Cardiac septum (tissue), 1 donor: ENCODE measurements at regions of chr1 and their contacts with region 1.

Region 1: DNA sequence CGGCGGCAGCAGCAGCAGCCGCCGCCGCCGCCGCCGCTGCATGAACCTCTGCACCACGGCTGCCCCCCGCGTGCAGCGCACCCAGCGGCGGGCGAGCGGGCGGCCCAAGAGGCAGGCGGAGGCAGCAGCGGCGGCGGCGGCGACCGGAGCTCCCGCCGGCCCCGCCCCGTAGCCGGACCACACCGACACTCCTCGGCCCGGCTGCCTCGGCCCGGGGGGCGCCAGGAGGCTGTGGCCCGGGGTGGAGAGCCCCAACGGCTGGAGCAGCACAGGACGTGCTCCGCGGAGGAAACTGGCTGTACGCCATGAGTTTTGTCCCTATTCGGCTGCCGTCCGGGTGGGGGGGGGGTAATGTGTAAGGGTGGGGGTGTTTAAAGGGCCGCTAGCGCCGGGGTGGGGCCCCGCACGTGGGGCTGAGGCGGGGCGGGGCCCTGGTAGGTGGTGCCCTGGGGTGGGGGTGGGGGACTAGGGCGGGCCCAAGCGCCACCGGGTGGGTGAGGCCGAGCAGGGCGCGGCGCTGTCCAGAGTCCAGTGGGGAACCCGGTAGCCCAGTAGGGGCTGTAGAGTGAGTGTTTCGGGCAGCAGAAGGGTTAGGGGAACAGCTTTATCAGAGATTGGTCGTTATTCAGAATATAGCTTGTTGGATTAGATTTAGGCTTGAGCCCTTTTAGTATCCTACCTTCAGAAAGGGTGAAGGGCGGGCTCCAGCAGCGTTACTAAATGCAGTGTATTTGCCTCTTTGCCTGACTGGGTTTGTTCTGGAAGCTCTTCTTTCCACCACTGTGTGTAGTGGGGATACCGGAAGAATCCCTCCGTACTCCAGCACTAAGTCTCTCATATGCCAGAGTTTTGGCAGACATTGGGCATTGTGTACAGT is at the start of gene FAM78B:
- DNase-seq: peak; percentile 81
- total RNA-seq, gene FAM78B: 2.7 TPM

Region 2: GRCh38 chr1:165403835-165404482 is 763.0 kb before region 1 on chr1:
- intact Hi-C with region 1: loop called (anchors 10 kb)
- DNase-seq: no peak

Region 3: DNA sequence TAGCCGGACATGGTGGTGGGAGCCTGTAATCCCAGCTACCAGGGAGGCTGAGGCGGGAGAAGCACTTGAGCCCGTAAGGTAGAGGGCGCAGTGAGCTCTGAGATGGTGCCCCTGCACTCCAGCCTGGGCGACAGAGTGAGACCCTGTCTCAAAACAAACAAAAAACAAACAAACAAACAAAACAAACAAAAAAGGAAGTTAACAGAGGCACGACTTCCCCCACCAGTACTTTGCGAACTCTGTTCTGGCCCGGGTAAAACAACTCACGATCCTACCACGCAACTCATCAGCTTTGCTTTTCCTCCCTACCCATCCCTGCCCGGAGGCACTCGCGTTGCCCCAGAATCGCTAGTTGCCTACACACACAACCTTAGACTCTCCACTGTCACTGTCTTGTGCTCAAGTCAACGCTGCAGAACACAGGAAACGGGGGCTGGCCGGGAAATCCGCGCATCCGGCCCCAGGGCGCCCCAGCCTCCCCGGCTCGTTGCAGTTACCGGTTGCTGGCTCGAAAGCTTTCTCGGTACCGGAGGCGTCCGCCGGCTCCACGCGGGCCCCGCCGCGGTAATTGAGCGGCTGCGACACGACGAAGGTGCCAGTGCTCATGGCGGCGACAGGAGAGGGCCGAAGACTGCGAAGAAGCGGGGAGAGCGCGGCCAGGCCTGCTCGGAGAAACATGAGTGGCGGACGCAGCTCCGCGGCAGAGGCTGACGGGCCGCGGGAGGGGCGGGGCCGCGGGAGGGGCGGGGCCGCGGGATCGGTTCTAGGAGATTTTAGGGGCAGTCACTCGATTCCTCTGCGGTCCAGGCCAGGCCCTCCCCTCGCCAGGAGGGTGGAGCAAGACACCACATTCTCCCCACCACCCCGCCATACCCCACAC is 468.8 kb before region 1 on chr1 and contains the start of gene ALDH9A1:
- intact Hi-C with region 1: loop called (anchors 5 kb)
- DNase-seq: peak; percentile 96
- total RNA-seq, gene ALDH9A1: 61.3 TPM

Region 4: DNA sequence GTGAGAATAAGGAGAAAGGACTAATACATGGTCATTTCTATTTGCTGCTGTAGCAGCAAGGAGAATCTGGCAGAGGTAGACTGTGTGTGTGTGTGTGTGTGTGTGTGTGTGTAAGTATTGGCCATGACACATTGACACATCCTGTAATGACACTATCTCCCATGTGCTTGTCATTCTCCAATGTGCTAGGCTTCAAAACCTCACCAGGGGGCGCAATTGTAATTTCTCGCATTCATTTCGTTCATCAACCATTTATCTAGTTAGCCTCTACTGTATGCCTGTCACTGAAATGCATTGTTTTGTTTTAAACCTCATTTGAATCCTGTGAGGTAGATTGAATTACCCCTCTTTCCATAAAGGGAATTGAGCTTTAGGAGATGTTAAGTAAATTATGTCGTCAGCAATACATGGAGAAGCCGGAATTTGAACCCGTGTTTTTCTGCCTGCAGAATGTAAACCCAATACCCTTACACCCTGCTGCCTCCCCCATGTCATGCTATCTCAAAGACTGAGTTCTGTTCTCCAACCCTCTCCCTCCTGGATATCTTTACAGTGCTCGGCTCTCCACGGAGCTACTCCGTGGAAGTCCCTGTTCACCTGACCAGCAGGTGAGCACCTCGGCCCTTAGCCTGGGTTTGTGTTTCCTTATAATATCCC is 238.7 kb before region 1 on chr1:
- intact Hi-C with region 1: loop called (anchors 5 kb)
- DNase-seq: no peak

Region 5: DNA sequence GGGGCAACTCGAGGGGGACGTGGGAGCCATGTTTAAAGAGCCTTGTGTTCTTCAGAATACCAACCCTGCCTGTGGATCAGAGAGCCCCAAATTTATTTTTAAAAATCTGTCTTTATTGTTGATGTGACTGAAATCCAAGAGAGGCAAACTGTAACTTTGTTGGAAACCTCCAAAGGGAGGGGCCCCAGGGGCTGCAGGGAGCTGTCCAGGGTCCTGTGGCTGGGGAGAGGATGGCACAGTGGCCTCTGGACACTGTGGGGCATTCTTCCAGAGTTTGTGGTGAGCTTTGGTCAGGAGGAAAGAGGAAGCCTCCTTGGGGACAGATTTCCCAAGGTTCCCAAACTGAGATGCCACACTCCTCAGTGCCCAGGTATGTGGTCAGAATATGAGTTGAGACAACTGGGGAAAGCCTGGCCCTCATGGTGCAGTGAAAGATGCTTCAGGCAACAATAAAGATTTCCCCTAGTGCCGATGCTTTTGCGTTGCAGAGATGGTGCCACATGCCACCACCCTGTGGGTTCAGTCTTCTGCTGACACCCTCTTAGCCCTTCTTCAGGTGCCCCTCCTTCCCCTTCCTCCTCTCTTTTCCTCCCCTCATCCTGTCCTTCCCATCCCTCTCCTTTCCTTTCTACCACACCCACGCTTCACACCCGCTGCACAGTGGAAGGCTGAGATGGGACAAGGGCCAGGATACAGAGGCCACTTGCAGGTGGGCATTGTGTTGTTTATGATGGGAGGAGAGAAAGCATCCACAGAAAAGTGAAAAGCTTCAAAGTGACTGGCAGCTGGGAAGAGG is 217.4 kb before region 1 on chr1:
- intact Hi-C with region 1: no loop called
- DNase-seq: no peak

Region 6: GRCh38 chr1:166089804-166090203 is 77.1 kb before region 1 on chr1:
- intact Hi-C with region 1: no loop called
- DNase-seq: peak; percentile 29

Region 7: GRCh38 chr1:166307261-166308188 is 140.6 kb after region 1 on chr1:
- intact Hi-C with region 1: loop called (anchors 2 kb)
- DNase-seq: no peak

Region 8: GRCh38 chr1:166384948-166385347 is 218.0 kb after region 1 on chr1:
- intact Hi-C with region 1: loop called (anchors 5 kb)
- DNase-seq: no peak